Sigmoid colon (tissue), 7 donors: ENCODE measurements at regions of chr19 and their contacts with region 1.

Region 1: GRCh38 chr19:8363803-8364771 is at the start of gene ANGPTL4:
- DNase-seq: peak; percentile 94
- H3K4me3 ChIP-seq: peak within 1 kb of the TSS; percentile 53 to 66 (median 60)
- H3K27ac ChIP-seq: peak within 1 kb of the TSS; percentile 79 to 90 (median 82)
- H3K4me1 ChIP-seq: peaks cover 0 to 81% (median 67%) of the 10 kb centered on the region in 4 donors
- H3K27me3 ChIP-seq: peaks cover 0 to 8% (median 0%) of the 10 kb centered on the region in 3 donors
- CTCF ChIP-seq: peak in 2 of 4 experiments; percentile 14 to 29
- EP300 ChIP-seq: no peak
- POLR2A ChIP-seq: peak; percentile 35 to 40
- total RNA-seq, gene ANGPTL4: 7.1 to 31.6 (median 24.0) TPM

Region 2: GRCh38 chr19:7919610-7920518 is 444.2 kb before region 1 on chr19 and contains the start of gene SNAPC2:
- intact Hi-C with region 1: loop called (anchors 10 kb)
- DNase-seq: peak; percentile 98
- H3K4me3 ChIP-seq: peak within 1 kb of the TSS; percentile 70 to 87 (median 74)
- H3K27ac ChIP-seq: peak within 1 kb of the TSS; percentile 93 to 98 (median 96)
- H3K4me1 ChIP-seq: peaks cover 0 to 83% (median 81%) of the 10 kb centered on the region in 4 donors
- H3K27me3 ChIP-seq: peaks cover 38 to 47% (median 44%) of the 10 kb centered on the region in 3 donors
- CTCF ChIP-seq: no peak
- EP300 ChIP-seq: peak in 1 of 4 donors; percentile 64
- POLR2A ChIP-seq: peak; percentile 22 to 59
- total RNA-seq, gene SNAPC2: 20.3 to 31.2 (median 27.8) TPM

Region 3: GRCh38 chr19:8334458-8335342 is 29.4 kb before region 1 on chr19:
- intact Hi-C with region 1: no loop called
- DNase-seq: no peak
- H3K4me3 ChIP-seq: peak overlapping the region in 3 of 4 donors; percentile 28 to 38 (median 33)
- H3K27ac ChIP-seq: no peak overlapping the region
- H3K4me1 ChIP-seq: peaks cover 0 to 26% (median 21%) of the 10 kb centered on the region in 4 donors
- H3K27me3 ChIP-seq: peaks cover 28 to 58% (median 38%) of the 10 kb centered on the region in 3 donors
- CTCF ChIP-seq: no peak
- EP300 ChIP-seq: no peak
- POLR2A ChIP-seq: no peak

Region 4: DNA sequence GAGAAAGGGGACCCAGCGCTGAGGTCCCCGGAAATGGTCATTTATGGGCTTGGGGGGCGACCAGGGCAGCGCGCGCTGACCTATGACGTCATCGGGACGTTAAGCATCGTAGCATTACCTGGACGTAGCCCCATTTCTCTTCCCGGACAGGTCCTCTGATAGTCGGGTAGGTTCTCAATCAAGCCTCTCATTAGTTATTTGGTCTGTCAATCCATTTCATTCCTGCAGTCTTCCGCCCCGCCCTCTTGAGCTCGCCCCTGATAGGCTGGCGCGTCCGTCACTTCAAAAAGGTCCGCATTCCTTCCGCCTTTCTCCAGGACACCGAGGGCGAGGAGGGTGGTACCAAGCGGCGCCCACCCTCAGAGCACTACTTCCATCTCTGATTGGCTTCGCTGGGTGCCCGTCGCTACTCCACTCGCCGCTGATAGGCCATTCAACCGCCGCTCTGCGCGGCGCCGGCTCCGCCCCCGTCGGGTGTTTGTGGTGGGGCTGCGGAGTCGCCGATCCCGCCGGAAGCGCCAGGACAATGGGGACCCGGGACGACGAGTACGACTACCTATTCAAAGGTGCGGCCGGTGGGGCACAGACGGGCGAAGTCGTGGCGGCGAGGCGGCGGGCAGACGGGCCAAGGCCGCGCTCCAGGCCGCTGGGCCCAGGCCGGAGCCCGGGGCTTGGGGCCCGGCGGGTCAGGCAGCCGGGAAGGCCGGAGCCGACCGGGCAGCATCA is 26.0 kb after region 1 on chr19 and contains the start of gene RAB11B:
- intact Hi-C with region 1: loop called (anchors 1 kb)
- DNase-seq: peak; percentile 100
- H3K4me3 ChIP-seq: peak within 1 kb of the TSS; percentile 55 to 100 (median 92)
- H3K27ac ChIP-seq: peak within 1 kb of the TSS; percentile 99 to 100 (median 100)
- H3K4me1 ChIP-seq: peaks cover 4 to 50% (median 44%) of the 10 kb centered on the region in 4 donors
- H3K27me3 ChIP-seq: no peaks in the 10 kb centered on the region
- CTCF ChIP-seq: no peak
- EP300 ChIP-seq: peak in 1 of 4 donors; percentile 55
- POLR2A ChIP-seq: no peak
- total RNA-seq, gene RAB11B: 17.5 to 42.1 (median 28.7) TPM